Pancreas (tissue), 10 donors: ENCODE measurements at regions of chr1 and their contacts with region 1.

Region 1: GRCh38 chr1:176559878-176560277 is 96.9 kb downstream of the PAPPA2 start:
- DNase-seq: peak in 3 of 6 donors; percentile 34 to 59 (median 53)
- ATAC-seq: peak; percentile 84 to 97 (median 92)
- H3K4me3 ChIP-seq: no peak overlapping the region
- H3K27ac ChIP-seq: no peak overlapping the region
- H3K4me1 ChIP-seq: no peaks in the 10 kb centered on the region
- H3K27me3 ChIP-seq: no peaks in the 10 kb centered on the region
- CTCF ChIP-seq: peak; percentile 50 to 83 (median 79)

Region 2: DNA sequence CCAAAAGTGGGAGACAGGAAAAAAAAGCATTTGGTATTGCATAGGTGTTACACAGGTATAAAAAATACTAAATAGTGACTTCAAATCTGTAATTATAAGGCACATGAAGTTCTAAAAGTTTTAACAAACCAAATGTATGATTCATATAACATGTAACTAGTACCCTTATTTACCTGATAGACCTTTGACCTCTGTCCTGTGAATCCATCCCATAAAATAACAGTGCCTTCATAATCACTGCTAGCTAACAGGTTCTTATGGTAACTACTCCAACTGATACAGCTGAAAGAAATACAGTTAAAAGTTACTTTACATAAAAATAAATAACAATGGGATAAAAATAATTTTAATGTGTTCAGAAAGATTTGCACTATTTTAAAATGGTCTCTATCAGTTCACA is 516.3 kb before region 1 on chr1:
- intact Hi-C with region 1: no loop called
- DNase-seq: no peak
- ATAC-seq: no peak
- H3K4me3 ChIP-seq: no peak overlapping the region
- H3K27ac ChIP-seq: no peak overlapping the region
- H3K4me1 ChIP-seq: no peaks in the 10 kb centered on the region
- H3K27me3 ChIP-seq: no peaks in the 10 kb centered on the region
- CTCF ChIP-seq: no peak

Region 3: GRCh38 chr1:176643536-176643935 is 83.7 kb after region 1 on chr1:
- intact Hi-C with region 1: no loop called
- DNase-seq: no peak
- ATAC-seq: peak in 1 of 4 donors; percentile 24
- H3K4me3 ChIP-seq: no peak overlapping the region
- H3K27ac ChIP-seq: no peak overlapping the region
- H3K4me1 ChIP-seq: no peaks in the 10 kb centered on the region
- H3K27me3 ChIP-seq: no peaks in the 10 kb centered on the region
- CTCF ChIP-seq: no peak

Region 4: DNA sequence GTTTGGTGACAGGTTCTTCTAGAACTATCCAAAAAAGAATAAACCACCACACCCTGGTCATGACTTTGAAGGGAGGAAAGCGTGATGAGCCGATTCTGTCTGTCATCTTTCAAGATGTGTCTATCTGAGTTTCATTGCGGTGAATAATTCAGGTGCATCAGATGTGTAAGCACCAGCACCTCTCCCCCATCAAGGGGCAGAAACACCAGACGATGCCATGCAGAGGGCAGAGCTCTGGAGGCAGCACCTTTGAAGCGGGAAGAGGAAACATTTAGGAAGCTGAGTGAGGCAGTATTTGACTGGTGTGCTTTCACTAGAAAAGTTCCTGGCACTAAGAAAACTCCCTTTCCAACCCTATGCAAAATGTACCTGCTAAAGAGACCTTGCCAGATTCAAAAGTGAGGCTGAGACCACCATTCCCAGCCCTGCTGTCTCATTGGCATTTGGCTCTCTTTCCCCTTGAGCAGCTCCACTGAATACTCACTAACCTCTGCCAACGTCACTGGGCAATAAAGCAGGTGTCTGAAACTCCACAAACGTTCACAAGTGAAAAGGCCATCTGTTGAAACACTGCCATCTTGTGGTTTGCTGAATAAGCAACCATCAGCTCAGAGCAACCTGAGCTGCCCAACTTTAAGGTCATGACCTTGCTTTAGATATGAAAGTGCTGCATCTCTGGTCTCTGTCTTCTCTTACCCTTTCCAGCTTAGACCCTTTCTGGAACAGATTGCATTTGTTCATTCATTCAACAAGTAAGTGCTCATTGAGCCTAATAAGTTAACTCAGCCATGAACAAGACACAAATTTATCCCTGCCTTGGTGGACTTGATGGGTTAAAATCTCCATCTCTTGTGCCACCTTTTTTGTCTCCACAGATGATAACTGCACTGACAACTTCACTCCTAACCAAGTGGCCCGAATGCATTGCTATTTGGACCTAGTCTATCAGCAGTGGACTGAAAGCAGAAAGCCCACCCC is 131.7 kb after region 1 on chr1:
- intact Hi-C with region 1: loop called in 2 of 3 experiments (anchors 5 kb)
- DNase-seq: peak in 4 of 6 donors; percentile 27 to 66 (median 62)
- ATAC-seq: peak; percentile 88 to 97 (median 94)
- H3K4me3 ChIP-seq: no peak overlapping the region
- H3K27ac ChIP-seq: no peak overlapping the region
- H3K4me1 ChIP-seq: peaks cover 0 to 3% (median 0%) of the 10 kb centered on the region in 3 donors
- H3K27me3 ChIP-seq: no peaks in the 10 kb centered on the region
- CTCF ChIP-seq: peak; percentile 50 to 73 (median 68)

Region 5: DNA sequence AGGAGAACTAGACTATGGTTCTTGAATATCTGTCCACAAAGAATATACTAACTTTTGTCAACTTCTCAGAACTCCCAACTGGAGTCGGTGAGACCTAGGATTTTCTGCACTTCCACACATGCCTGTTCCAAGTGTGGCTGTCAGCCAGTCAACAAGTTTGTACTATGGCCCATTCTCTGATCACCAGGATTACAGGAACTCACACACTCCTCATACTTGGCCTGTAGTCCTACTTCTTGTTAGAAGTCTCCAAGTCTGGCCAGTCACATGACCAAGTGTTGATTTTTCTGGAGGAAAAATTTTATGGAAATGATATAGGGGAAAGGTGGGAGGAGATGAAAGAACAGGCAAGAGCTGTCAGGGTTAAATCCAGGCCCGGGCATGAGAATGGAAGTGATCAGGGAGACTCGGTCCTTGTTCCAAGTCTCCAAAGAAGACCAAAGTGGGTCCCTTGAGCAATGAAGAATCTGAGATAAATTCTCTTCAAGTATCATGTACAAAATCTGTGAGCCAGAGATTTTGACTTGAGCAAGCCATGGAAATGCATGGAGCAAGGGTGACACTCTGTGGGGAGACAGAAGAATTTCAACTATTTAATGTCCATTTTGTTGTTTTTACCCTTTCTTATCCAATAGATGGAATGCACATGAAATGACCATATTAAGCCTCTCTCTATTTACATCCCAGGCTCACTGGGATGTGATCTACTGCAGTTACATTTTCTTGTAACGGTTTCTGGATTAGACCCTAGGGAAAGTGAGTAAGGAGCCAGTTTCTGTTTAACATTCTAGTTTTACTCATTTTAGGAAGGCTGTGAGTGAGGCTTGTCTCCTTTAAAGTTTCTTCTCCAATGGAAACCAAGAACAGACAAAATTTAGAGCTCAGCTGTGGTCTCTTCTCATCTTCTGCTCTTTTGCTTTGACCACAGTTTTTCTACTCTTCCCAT is 283.7 kb after region 1 on chr1:
- intact Hi-C with region 1: loop called in 2 of 3 experiments (anchors 10 kb)
- DNase-seq: peak in 3 of 6 donors; percentile 13 to 55 (median 16)
- ATAC-seq: peak in 3 of 4 donors; percentile 82 to 86 (median 83)
- H3K4me3 ChIP-seq: no peak overlapping the region
- H3K27ac ChIP-seq: no peak overlapping the region
- H3K4me1 ChIP-seq: no peaks in the 10 kb centered on the region
- H3K27me3 ChIP-seq: no peaks in the 10 kb centered on the region
- CTCF ChIP-seq: peak in 2 of 4 donors; percentile 37 to 41

Region 6: GRCh38 chr1:176880954-176881595 is 321.2 kb after region 1 on chr1:
- intact Hi-C with region 1: loop called in 1 of 3 experiments (anchors 5 kb)
- DNase-seq: peak; percentile 54 to 90 (median 76)
- ATAC-seq: peak; percentile 84 to 94 (median 92)
- H3K4me3 ChIP-seq: no peak overlapping the region
- H3K27ac ChIP-seq: no peak overlapping the region
- H3K4me1 ChIP-seq: no peaks in the 10 kb centered on the region
- H3K27me3 ChIP-seq: no peaks in the 10 kb centered on the region
- CTCF ChIP-seq: peak; percentile 76 to 85 (median 80)